ENCODE measurements at regions of chr3 and their contacts with region 1.

Region 1: GRCh38 chr3:103494011-103494410 is 1059.2 kb downstream of the ZPLD1 start:
- DNase-seq: no peak
- H3K4me3 ChIP-seq: no peak overlapping the region
- CTCF ChIP-seq: no peak
- POLR2A ChIP-seq: no peak

Region 2: GRCh38 chr3:102512734-102513518 is 981.1 kb before region 1 on chr3:
- intact Hi-C with region 1: no loop called
- DNase-seq: no peak
- H3K4me3 ChIP-seq: no peak overlapping the region
- CTCF ChIP-seq: no peak
- POLR2A ChIP-seq: no peak

Region 3: DNA sequence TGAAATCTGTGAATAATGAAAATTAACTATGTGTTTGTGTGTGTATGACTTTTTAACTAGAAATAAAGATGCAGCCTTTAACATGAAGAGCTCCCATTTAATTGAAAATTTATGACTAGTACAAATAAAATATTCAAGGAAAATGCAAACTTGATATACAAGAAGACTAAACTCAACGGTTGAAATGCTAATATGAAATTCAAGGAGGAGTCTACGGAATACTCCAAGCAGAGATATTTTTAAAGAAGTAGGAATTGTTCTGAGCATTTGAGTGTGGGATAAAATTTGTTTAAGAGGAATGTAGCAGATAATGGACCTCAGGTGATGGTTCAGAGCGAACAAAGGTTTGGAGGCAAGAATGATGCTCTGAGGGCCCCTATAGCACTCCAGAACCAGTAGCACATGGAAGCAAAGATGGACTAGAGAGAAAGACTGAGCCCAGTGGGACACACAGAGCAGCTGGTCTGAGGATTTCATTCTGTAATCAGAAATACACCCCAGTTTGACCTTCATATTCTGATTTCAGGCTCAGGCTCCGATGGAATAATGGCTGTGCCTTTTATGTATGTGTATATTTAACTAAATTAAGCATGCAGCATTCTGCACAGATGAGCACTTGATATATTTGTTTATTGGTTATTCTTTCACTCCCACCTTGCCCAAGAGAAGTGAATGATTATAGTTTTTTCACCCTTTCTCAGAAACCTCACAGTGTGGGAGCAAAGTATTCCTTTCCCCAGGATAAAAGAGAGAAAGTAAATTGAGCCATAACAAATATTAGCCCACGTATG is 832.1 kb before region 1 on chr3:
- intact Hi-C with region 1: loop called (anchors 5 kb)
- DNase-seq: no peak
- H3K4me3 ChIP-seq: no peak overlapping the region
- CTCF ChIP-seq: no peak
- POLR2A ChIP-seq: no peak

Region 4: GRCh38 chr3:103847081-103848062 is 353.4 kb after region 1 on chr3:
- intact Hi-C with region 1: no loop called
- DNase-seq: no peak
- H3K4me3 ChIP-seq: no peak overlapping the region
- CTCF ChIP-seq: no peak
- POLR2A ChIP-seq: no peak

Region 5: GRCh38 chr3:104040896-104041295 is 546.9 kb after region 1 on chr3:
- intact Hi-C with region 1: no loop called
- DNase-seq: no peak
- H3K4me3 ChIP-seq: no peak overlapping the region
- CTCF ChIP-seq: no peak
- POLR2A ChIP-seq: no peak

Measured in lower leg skin (tissue), 4 donors.